CD4-positive, alpha-beta T cell (primary cell): ENCODE measurements at regions of chr12 and their contacts with region 1.

Region 1: DNA sequence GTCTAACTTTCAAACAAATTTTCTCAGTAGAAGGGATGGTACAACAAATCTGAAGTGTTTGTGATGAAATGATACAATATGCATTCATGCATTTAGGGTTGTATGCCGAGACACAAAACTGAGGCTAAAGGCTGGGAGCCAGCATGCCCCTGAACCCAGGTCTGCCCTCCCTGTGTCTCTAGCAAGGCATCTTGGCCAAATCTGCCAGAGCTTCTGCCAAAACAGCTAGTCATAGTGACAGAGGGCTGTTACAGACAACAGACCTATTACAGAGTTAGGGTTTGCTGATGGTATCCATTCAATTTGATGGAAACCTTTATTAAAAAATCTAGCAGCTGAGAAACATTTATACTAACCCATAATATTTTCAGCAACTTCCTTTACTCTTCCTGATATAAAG is 11.3 kb upstream of the CHPT1 start:
- DNase-seq: no peak
- ATAC-seq: no peak
- H3K4me3 ChIP-seq: no peak overlapping the region
- H3K4me3 Mint-ChIP-seq: no peak overlapping the region
- H3K27ac ChIP-seq: no peak overlapping the region
- H3K27ac Mint-ChIP-seq: no peak overlapping the region
- H3K4me1 ChIP-seq: no peaks in the 10 kb centered on the region
- H3K4me1 Mint-ChIP-seq: no peaks in the 10 kb centered on the region
- H3K27me3 ChIP-seq: no peaks in the 10 kb centered on the region
- H3K27me3 Mint-ChIP-seq: no peaks in the 10 kb centered on the region
- CTCF ChIP-seq: no peak

Region 2: GRCh38 chr12:101706403-101706802 is 20.2 kb after region 1 on chr12:
- CTCF ChIA-PET with region 1: interaction called, 5 read pairs
- POLR2A ChIA-PET with region 1: no interaction called
- intact Hi-C with region 1: loop called in 1 of 2 experiments (anchors 1 kb)
- DNase-seq: no peak
- ATAC-seq: no peak
- H3K4me3 ChIP-seq: no peak overlapping the region
- H3K4me3 Mint-ChIP-seq: no peak overlapping the region
- H3K27ac ChIP-seq: no peak overlapping the region
- H3K27ac Mint-ChIP-seq: no peak overlapping the region
- H3K4me1 ChIP-seq: peaks cover 7% of the 10 kb centered on the region
- H3K4me1 Mint-ChIP-seq: peaks cover 20% of the 10 kb centered on the region
- H3K27me3 ChIP-seq: no peaks in the 10 kb centered on the region
- H3K27me3 Mint-ChIP-seq: no peaks in the 10 kb centered on the region
- CTCF ChIP-seq: no peak